Head of caudate nucleus (tissue), 42 donors: ENCODE measurements at regions of chr2 and their contacts with region 1.

Region 1: DNA sequence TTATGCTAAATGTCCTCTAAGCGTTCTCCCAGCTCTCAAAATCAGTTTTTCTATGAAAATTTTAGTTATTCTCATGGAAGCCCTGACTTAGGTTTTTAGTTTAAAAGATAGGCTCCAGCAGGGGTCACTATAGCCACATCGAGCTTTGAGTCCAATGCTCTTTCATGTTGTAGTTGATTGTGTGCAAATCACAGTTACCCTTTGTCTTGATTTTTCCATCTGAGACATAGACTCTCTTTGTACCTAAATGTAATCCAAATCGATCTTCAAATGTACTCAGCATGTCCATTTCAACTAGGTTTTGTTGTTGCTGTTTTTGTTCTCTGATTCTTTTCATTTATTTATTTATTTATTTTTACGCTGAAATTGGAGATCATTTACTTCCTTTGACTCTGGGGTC is 26.4 kb upstream of the MSTN start:
- DNase-seq: peak in 38 of 42 donors; percentile 21 to 89 (median 63)

Region 2: DNA sequence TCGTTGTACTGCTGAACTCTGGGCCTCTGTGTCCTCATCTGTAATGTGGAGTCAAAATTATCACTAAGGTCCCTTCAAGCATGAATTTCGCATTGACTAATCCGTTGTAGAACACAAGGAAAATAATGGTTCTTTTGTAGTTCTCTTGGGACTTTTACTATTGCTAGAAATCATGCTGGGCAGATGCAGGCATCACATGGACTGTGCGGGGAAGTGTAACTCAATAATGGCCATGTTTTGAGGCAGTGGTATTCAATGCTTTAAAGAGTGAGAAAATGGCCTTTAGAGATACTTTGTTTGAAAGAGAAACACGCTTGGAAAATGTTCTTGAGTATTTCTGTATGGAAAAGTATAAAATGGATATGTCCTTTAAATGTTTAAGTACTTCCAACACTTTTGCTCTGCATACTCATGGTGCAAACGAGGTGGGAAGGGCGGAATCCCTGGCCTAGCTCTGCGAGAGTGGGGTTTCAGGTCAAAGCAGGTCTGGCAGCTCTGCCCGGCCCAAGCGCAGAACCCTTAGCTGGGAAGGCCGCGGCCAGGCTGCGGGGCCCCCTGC is 90.9 kb after region 1 on chr2:
- intact Hi-C with region 1: loop called (anchors 10 kb)
- DNase-seq: peak in 34 of 42 donors; percentile 17 to 84 (median 59)

Region 3: DNA sequence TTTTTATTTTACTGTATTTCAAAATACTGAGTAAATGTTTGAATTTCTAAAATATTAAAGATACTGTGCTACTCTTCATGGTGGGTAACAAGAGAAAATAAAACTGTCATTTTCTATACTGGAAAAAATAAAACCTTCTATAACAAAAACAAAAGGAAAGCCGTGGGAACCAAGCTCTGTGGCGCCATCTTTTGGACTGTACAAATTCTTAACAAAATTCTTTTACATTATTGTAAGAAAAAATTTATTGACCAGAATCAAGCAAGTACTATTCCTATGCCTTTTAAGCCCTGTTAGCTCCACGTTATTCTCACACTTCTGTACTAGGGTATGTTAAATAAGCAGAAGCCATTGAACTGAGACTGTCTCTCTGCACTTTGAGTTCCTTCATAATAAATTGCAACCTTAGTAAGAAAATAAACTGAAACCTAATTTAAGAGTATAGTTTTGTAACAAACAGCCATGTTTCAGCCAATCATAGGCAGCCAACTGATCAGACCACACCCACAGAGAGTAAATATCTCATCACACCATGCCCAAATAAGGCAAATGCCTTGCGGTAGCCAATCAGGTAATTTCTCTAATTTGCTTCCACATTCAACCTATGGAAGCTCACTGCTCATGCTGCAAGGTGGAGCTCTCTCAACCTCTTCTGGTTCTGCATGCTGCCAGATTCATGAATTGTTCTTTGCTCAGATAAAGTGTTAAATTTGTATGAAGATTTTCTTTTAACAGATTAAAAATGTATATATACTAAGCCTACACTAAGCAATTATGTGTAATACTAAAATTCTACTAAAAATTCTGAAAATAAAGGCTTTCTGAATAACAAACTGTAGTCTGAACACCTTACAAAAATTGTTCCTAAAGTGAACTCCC is 188.6 kb after region 1 on chr2:
- intact Hi-C with region 1: loop called (anchors 5 kb)
- DNase-seq: peak in 13 of 42 donors; percentile 5 to 69 (median 17)

Region 4: GRCh38 chr2:190319555-190320498 is 230.9 kb after region 1 on chr2 and contains the start of gene HIBCH:
- intact Hi-C with region 1: loop called (anchors 10 kb)
- DNase-seq: peak; percentile 95 to 100 (median 99)

Region 5: DNA sequence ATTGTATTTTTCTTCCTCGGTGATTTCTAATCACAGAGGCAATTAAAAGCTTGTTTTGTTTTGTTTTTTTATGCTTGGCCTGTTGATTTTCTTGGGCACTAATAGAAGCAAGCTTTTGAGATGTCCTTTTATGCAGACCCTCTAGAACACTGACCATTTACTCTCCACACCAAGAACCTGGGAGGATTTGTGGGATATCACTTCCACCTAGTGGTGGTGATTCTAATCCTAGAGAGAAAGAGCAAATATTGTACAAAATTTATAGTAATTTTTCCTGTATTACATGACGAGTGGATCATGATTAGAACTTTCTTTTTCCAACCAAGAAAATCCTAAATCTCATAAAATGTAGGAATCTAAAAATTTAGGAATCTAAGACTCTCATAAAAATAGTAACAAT is 422.2 kb after region 1 on chr2:
- intact Hi-C with region 1: loop called (anchors 10 kb)
- DNase-seq: peak in 5 of 42 donors; percentile 47 to 68 (median 51)